Left cardiac atrium (tissue), 4 donors: ENCODE measurements at regions of chr16 and their contacts with region 1.

Region 1: DNA sequence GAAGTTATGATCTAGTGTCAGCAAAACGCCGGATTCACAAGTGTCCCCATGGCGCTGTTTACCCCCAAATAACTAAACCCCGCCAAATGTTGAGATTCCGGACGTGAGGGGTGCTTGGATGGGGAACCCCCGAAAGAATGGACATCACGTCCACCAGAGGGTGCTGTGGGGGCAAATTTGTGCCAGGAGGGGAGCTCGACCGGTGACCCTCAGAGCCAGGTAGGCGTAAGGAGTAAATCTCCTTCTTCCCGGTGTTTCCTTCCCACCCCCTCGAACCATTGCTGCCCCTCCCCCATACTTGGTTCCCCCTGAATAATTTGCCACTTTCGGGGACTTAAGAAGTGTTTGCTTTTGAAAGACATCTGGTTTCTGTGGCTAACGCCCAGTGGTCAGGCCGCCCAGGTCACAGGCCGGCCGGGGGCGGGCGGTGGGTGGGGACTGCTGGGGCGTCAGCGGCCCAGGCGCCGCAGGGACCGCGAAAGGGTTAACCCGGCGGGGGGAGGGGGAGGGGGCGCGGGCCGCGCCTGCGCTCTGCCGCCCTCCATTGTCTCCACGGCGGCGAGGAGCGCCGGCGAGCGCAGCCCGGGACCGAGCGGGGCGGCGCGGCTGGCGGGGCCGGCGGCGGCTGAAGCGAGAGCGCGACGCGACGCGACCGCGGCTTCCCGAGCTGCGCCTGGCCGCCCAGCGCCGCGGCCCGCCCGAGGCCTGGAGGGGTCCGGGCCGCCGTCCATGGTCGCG is at the start of gene ZNRF1:
- DNase-seq: peak; percentile 87
- ATAC-seq: peak; percentile 86 to 88
- total RNA-seq, gene ZNRF1: 16.7 to 17.5 TPM

Region 2: GRCh38 chr16:74843719-74844433 is 154.8 kb before region 1 on chr16:
- intact Hi-C with region 1: no loop called
- DNase-seq: no peak
- ATAC-seq: no peak

Region 3: DNA sequence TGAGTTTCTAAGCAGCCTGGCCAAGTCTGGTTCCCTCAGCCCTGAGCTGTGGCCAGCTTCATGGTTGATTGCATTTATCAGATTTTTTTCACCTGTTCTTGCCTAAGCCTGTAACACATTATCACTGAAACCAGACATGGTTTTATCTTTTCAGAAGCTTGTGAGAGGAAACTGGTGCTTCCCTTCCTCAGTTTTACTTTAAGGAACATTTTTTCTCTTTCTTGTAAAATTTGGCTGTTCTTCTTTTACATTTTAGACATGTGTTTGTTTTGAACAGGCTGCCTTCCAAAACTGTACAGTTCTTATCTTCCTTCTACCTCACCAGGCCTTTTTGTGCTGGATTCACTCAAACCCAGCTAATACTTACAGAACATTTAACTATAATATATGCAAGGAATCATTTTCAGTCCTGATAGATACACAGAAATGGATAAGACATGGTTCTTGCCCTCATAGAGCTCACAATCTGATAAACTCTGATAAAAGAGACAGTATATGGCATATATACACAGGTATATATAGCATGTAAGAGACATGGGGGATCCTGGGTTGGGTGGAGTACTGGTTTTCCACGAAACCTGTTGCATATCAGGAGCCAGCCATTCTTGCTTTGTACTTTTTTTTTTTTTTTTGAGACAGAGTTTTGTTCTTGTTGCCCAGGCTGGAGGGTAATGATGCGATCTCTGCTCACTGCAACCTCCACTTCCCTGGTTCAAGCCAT is 44.7 kb after region 1 on chr16:
- intact Hi-C with region 1: loop called in 1 of 2 experiments (anchors 5 kb)
- DNase-seq: no peak
- ATAC-seq: peak; percentile 25 to 64